Gastrocnemius medialis (tissue), 4 donors: ENCODE measurements at regions of chr18 and their contacts with region 1.

Region 1: GRCh38 chr18:62131301-62131909 is 55.5 kb downstream of the PIGN start:
- DNase-seq: peak; percentile 13 to 14
- ATAC-seq: no peak
- H3K4me3 ChIP-seq: no peak overlapping the region
- H3K27ac ChIP-seq: no peak overlapping the region
- H3K4me1 ChIP-seq: no peaks in the 10 kb centered on the region
- H3K27me3 ChIP-seq: no peaks in the 10 kb centered on the region
- CTCF ChIP-seq: peak; percentile 69 to 84 (median 78)
- POLR2A ChIP-seq: no peak

Region 2: DNA sequence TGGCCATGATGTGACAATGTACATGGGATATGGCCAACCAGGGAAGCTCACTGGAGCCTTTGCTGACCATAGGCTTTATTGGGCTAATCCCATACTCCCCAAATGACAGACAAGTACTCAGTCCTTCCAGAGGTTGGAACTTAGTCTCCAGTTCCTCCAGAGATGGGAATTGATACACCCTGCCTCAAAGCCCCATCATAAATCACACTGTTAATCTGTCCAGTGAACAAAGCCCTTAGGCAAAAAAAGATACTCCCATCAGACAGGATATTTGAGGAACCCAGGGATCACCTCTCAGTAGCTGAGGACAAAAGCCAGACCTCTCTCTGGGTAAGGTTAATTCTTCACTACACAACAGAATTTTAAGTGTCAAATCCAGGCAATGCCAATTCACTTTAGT is 1045.6 kb before region 1 on chr18:
- in situ Hi-C with region 1: loop called in 1 of 4 experiments (anchors 25 kb)
- intact Hi-C with region 1: no loop called
- DNase-seq: no peak
- ATAC-seq: no peak
- H3K4me3 ChIP-seq: no peak overlapping the region
- H3K27ac ChIP-seq: no peak overlapping the region
- H3K4me1 ChIP-seq: no peaks in the 10 kb centered on the region
- H3K27me3 ChIP-seq: no peaks in the 10 kb centered on the region
- CTCF ChIP-seq: no peak
- POLR2A ChIP-seq: no peak

Region 3: DNA sequence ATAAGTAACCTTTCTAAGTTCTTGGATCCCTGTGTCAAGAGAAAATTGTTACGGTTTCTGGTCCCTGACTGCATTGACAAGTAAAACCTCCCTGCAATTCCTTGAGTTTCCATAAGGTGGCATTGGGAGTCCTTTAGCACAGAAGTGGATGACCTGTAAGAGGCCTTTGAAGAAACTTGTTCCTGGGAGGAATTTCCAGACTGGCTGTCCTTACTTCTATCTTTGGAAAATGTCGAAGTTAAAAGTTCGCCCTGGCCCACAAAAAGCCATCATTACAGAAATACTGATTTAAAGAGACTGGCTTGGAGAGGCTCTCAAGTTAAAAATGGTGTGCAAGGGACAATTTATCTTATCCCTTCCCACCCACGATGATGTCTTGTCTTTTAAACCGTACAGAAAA is 579.8 kb before region 1 on chr18:
- in situ Hi-C with region 1: no loop called
- intact Hi-C with region 1: loop called (anchors 1 kb)
- DNase-seq: peak in 1 of 2 donors; percentile 22
- ATAC-seq: peak; percentile 56 to 65
- H3K4me3 ChIP-seq: no peak overlapping the region
- H3K27ac ChIP-seq: no peak overlapping the region
- H3K4me1 ChIP-seq: no peaks in the 10 kb centered on the region
- H3K27me3 ChIP-seq: no peaks in the 10 kb centered on the region
- CTCF ChIP-seq: peak in 4 of 5 experiments; percentile 27 to 81 (median 50)
- POLR2A ChIP-seq: no peak

Region 4: DNA sequence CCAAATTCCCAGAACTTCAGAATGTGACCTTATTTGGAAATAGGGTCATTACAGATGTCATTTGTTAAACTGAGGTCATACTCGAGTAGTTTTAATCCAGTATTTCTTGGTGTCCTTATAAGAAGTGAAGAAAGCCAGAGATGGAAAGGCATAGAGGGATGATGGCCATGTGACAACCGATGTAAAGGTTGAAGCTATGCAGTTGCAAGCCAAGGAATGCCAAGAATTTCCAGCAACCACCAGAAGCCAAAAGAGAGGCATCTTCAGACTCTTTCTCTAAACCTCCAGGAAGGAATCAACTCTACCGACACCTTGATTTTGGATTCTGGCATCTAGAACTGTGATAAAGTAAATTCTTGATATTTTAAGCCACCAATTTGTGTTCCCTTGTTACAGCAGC is 556.0 kb before region 1 on chr18:
- in situ Hi-C with region 1: loop called (anchors 10 to 25 kb)
- intact Hi-C with region 1: no loop called
- DNase-seq: no peak
- ATAC-seq: no peak
- H3K4me3 ChIP-seq: no peak overlapping the region
- H3K27ac ChIP-seq: no peak overlapping the region
- H3K4me1 ChIP-seq: peaks cover 0 to 17% of the 10 kb centered on the region in 2 donors
- H3K27me3 ChIP-seq: no peaks in the 10 kb centered on the region
- CTCF ChIP-seq: no peak
- POLR2A ChIP-seq: no peak

Region 5: DNA sequence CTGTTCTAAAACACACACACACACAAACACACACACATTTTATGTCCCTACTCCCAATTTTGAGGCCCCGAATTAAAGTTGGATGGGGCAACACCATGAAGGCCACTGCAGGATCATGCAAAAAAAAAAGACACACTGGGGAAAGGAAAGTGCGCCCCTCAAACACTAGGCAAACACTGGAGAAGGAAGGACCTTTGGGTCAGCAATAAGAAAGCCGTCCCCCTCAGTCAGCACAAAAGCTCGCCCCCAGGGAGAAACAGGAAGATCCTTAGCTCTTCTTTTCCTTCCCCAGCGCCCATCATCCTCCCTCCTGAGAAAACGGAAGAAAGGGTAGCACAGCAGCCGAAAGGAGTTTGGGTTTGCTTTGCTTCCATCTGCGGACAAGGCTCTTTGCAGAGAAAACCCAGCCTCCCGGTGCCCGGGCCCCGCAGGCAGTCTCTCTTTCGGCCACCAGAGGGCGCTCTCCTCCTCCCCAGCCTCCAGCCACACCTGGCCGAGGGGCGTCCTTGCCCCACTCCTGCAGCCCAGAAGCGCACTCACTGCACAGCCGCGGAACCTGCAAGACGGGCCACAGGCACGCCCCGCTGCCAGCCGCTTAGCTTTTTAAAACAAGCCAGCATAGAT is 549.7 kb before region 1 on chr18:
- in situ Hi-C with region 1: loop called (anchors 10 to 25 kb)
- intact Hi-C with region 1: loop called (anchors 1 kb)
- DNase-seq: peak; percentile 24 to 43
- ATAC-seq: peak; percentile 75 to 83
- H3K4me3 ChIP-seq: peak overlapping the region; percentile 43 to 53 (median 45)
- H3K27ac ChIP-seq: peak overlapping the region; percentile 37 to 69 (median 54)
- H3K4me1 ChIP-seq: peaks cover 8 to 17% of the 10 kb centered on the region in 2 donors
- H3K27me3 ChIP-seq: no peaks in the 10 kb centered on the region
- CTCF ChIP-seq: peak; percentile 70 to 97 (median 88)
- POLR2A ChIP-seq: no peak

Region 6: GRCh38 chr18:61901323-61901986 is 229.9 kb before region 1 on chr18:
- in situ Hi-C with region 1: loop called in 1 of 4 experiments (anchors 25 kb)
- intact Hi-C with region 1: no loop called
- DNase-seq: no peak
- ATAC-seq: peak; percentile 56 to 80
- H3K4me3 ChIP-seq: no peak overlapping the region
- H3K27ac ChIP-seq: no peak overlapping the region
- H3K4me1 ChIP-seq: no peaks in the 10 kb centered on the region
- H3K27me3 ChIP-seq: no peaks in the 10 kb centered on the region
- CTCF ChIP-seq: peak; percentile 40 to 81 (median 63)
- POLR2A ChIP-seq: no peak